ENCODE measurements at regions of chr4 and their contacts with region 1.

Region 1: GRCh38 chr4:185471235-185472102 is at the start of gene CCDC110:
- DNase-seq: peak; percentile 95 to 97 (median 96)
- ATAC-seq: peak; percentile 98
- H3K4me3 ChIP-seq: peak within 1 kb of the TSS; percentile 30
- H3K4me1 ChIP-seq: no peaks in the 10 kb centered on the region
- CTCF ChIP-seq: peak; percentile 73
- total RNA-seq, gene CCDC110: 0.69 to 5.4 (median 1.8) TPM

Region 2: GRCh38 chr4:185276036-185276435 is 195.4 kb before region 1 on chr4:
- intact Hi-C with region 1: no loop called
- DNase-seq: no peak
- ATAC-seq: peak; percentile 65
- H3K4me3 ChIP-seq: no peak overlapping the region
- H3K4me1 ChIP-seq: peaks cover 7% of the 10 kb centered on the region
- CTCF ChIP-seq: no peak

Region 3: GRCh38 chr4:185425647-185426352 is 45.7 kb before region 1 on chr4 and contains the start of gene UFSP2:
- intact Hi-C with region 1: no loop called
- DNase-seq: peak; percentile 92 to 93 (median 93)
- ATAC-seq: peak; percentile 98
- H3K4me3 ChIP-seq: peak within 1 kb of the TSS; percentile 86
- H3K4me1 ChIP-seq: no peaks in the 10 kb centered on the region
- CTCF ChIP-seq: peak; percentile 7
- total RNA-seq, gene UFSP2: 19.3 to 32.9 (median 20.2) TPM

Region 4: GRCh38 chr4:185597532-185598188 is 126.2 kb after region 1 on chr4:
- intact Hi-C with region 1: loop called (anchors 5 to 10 kb)
- DNase-seq: peak; percentile 58 to 79 (median 79)
- ATAC-seq: peak; percentile 88
- H3K4me3 ChIP-seq: no peak overlapping the region
- H3K4me1 ChIP-seq: no peaks in the 10 kb centered on the region
- CTCF ChIP-seq: peak; percentile 92

Measured in mucosa of descending colon (tissue), 3 donors.